Prostate gland (tissue), 2 donors: ENCODE measurements at regions of chr11 and their contacts with region 1.

Region 1: DNA sequence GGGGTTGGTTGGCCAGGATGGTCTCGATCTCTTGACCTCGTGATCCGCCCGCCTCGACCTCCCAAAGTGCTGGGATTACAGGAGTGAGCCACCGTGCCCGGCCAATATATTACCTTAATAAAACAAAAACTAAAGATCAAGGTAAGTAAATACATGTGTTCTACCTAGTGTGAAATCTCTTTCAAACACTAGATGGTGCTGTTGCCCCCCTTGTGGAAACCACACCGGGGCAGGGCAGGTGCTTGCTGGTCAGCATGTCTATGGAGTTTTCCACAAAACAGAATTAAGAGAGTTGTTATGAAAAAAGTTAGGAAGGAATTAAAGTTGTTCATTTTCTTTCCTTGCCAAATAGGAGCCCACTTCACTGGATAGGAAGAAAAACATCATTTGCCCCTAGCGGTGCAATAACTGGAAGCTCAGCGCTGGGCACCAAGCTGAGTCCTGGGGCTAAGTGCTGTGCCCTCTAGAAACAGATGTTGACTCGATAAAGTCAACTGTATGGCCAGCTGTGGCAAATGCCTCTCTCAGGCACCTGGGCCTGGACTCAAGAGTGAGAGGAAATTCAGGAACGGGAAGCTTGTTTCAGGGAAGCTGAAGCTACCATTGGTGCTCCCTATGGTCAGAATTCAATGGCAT is 6.3 kb upstream of the KCNJ5 start:
- DNase-seq: peak; percentile 78
- H3K4me3 ChIP-seq: no peak overlapping the region
- H3K27ac ChIP-seq: no peak overlapping the region
- H3K4me1 ChIP-seq: peaks cover 3% of the 10 kb centered on the region
- H3K27me3 ChIP-seq: no peaks in the 10 kb centered on the region
- CTCF ChIP-seq: peak; percentile 73 to 91 (median 90)
- POLR2A ChIP-seq: no peak

Region 2: DNA sequence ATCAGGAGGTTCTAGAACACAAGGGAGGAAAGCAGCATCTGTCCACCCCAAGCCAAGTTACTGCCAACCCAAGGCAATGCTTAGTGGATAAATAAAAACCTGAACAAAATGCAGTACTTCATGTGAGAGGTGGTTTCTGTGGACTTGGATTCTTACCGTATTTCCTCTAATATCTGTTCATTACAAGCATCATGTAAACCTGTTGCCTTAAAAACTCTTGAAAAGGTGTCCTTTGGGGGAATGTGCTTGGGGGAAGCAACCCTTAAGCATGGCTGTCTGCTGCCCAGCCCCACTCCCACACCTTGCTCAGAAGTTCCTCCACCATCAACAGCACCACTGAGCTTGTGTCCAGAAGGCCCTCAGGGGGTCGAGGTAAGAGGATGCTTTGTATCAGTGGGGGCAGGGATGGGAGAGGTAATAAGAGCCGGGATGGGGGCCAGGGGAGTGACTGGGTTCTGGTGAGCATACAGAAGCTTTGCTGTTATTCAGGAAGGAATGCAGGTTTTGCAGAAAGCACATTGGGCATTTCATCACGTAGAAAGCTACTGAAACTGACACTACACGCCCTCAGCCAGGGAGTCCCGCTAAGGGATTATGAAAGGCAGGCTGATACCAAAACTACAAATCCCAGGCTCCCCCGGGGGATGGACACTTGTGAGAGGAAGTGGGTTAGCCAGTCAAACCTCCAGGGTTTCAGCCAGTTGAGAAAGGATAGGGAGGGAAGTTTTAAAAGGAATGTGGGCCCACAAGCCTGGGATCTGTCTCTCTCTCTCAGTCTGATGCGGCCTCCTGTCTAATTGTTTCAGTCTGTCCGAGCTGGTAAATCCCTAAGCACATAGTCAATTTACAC is 69.7 kb before region 1 on chr11:
- intact Hi-C with region 1: no loop called
- DNase-seq: no peak
- H3K4me3 ChIP-seq: no peak overlapping the region
- H3K27ac ChIP-seq: no peak overlapping the region
- H3K4me1 ChIP-seq: no peaks in the 10 kb centered on the region
- H3K27me3 ChIP-seq: no peaks in the 10 kb centered on the region
- CTCF ChIP-seq: no peak
- POLR2A ChIP-seq: no peak

Region 3: GRCh38 chr11:128956401-128957201 is 71.8 kb after region 1 on chr11:
- intact Hi-C with region 1: loop called (anchors 2 kb)
- DNase-seq: peak; percentile 61
- H3K4me3 ChIP-seq: no peak overlapping the region
- H3K27ac ChIP-seq: no peak overlapping the region
- H3K4me1 ChIP-seq: no peaks in the 10 kb centered on the region
- H3K27me3 ChIP-seq: no peaks in the 10 kb centered on the region
- CTCF ChIP-seq: peak; percentile 35 to 88 (median 80)
- POLR2A ChIP-seq: no peak

Region 4: DNA sequence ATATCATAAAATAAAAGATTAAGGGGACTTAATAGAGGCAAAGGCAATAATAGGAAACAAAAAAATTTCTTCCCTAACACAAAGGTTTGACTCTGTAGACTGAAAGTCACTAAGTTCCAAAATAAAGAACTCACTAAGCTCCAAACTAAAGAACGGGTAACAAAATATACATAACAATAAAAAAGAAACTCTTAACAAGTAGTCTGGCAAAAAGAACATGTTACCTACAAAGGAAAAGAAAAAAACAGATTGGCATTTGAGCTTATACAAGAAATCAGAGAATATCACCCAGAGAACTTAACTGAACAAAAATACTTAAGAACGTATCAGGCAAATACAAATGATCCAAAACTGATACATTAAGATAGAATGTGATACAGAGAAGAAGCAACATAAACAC is 299.8 kb after region 1 on chr11:
- intact Hi-C with region 1: no loop called
- DNase-seq: no peak
- H3K4me3 ChIP-seq: no peak overlapping the region
- H3K27ac ChIP-seq: no peak overlapping the region
- H3K4me1 ChIP-seq: no peaks in the 10 kb centered on the region
- H3K27me3 ChIP-seq: no peaks in the 10 kb centered on the region
- CTCF ChIP-seq: no peak
- POLR2A ChIP-seq: no peak

Region 5: DNA sequence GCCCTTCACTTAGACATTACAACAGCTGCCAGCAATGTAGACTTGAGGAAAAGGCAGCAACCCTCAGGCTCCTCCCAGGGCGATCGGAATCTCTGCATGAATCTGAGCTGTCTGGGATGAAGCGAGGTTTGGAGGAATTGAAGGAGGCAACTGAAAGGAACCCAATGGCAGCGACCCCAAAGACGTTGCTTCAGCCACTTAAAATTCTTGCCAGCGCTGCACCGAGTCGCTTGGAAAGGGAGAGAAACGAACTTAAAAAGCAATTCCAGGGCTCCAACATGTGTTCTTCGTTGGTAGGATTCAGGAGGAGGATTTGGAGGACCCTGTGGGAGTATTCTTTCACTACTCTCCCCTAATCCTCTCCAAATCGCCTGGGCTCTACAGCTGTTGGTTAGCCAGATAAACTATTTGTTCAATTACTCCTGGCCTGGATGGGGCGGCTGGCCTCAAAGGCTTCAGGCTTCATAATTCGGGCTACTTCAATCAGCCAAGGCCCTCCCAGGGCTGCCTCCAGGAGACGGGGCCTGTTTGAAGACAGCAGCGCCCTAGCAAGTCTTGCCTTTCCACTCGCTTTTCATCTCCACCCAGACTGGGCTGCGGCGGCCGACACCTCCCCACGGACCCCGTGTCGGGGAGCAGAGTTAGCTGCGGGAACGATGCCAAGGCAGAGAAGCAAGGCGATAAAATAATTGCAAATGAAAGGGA is 858.4 kb after region 1 on chr11:
- intact Hi-C with region 1: loop called (anchors 10 kb)
- DNase-seq: no peak
- H3K4me3 ChIP-seq: no peak overlapping the region
- H3K27ac ChIP-seq: no peak overlapping the region
- H3K4me1 ChIP-seq: no peaks in the 10 kb centered on the region
- H3K27me3 ChIP-seq: no peaks in the 10 kb centered on the region
- CTCF ChIP-seq: no peak
- POLR2A ChIP-seq: no peak